GM13977 (cell line): ENCODE measurements at regions of chr16 and their contacts with region 1.

Region 1: GRCh38 chr16:70767377-70768202 is 33.4 kb downstream of the VAC14 start:
- DNase-seq: no peak
- CTCF ChIP-seq: no peak

Region 2: GRCh38 chr16:70685938-70686375 is 81.6 kb before region 1 on chr16 and contains the start of gene MTSS2:
- in situ Hi-C with region 1: loop called (anchors 10 kb)
- DNase-seq: peak; percentile 72
- CTCF ChIP-seq: no peak

Region 3: GRCh38 chr16:71504901-71505300 is 737.3 kb after region 1 on chr16:
- in situ Hi-C with region 1: no loop called
- DNase-seq: no peak
- CTCF ChIP-seq: no peak